ENCODE measurements at regions of chr17 and their contacts with region 1.

Region 1: GRCh38 chr17:12744298-12744697 is 45.0 kb upstream of the ARHGAP44 start:
- DNase-seq: no peak
- H3K4me3 ChIP-seq: no peak overlapping the region
- CTCF ChIP-seq: no peak

Region 2: DNA sequence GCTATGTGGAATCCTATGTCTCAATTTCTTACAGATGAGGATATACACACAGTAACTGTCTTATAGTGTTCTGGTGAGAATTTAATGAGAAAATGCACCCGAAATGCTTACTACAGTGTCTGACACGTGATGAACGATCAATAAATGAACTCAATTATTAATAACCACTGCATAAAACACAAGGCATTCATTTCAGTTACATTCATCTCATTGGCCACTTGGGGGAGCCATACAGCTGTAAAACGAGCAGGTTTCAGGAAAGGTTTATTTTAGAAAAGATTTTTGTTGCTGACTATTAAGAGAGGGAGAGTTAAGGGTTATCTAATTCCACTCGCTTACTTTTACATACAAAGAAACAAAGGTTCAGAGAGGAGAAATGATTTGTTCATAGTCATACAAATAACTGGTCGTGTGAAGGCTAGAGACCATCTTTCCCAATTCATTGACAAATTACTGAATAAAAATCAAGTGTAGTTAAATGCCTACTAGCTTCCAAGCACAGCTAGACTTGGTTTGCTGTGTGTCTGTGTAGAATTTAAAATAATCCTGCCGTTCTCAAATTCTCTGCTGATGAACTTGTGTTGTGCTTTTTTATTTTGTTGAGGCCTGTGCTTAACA is 563.5 kb before region 1 on chr17:
- CTCF ChIA-PET with region 1: interaction called, 26 read pairs
- POLR2A ChIA-PET with region 1: no interaction called
- DNase-seq: peak; percentile 24
- H3K4me3 ChIP-seq: no peak overlapping the region
- CTCF ChIP-seq: peak; percentile 46

Region 3: DNA sequence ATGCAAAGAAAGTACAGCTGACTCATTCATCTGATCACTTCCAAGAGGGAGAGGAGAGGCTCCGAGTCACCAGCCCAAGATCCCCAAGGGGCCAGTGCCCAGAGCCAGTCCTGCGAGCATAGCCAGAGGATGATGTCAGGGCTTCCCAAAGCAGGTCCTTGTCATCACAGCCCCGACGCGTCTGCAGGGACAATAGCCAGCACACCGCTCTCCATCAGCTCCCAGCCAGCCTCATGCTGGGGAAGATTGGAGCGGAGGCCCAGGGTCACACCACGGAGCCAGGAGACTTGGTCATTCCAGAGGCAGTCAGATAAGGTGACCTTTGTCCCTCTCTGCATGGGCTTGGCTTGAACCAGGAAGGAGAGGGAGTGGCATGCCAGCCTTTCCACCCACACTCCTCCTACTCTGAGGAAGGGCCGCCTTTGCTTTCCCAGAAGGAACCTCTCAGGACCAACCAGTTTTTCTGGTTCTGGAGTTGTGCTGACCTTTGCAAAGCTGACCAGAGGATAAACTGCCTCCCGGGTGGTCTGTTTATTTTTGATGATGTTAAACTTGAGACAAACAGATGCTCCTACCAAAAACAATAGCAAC is 13.3 kb before region 1 on chr17:
- CTCF ChIA-PET with region 1: interaction called, 35 read pairs
- POLR2A ChIA-PET with region 1: no interaction called
- DNase-seq: peak; percentile 46
- H3K4me3 ChIP-seq: no peak overlapping the region
- CTCF ChIP-seq: no peak

Region 4: DNA sequence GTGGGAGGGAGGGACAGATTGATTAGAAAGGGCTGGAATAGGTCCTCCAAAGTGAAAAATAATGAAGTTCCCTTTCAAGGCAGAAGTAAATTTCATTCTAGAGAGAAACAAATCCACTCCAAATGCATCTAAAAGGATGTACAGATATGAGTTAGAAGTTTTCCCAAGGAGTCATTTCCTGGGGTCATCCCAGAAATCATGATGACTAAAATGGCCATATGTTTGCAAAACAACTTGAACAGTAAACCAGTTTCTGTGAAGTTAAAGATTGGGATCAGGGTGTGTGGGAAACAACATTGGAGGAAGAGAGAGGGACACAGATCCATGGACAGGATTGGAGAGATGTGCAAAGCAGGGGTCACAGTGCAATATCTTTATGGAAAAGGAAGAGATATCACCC is 12.5 kb after region 1 on chr17:
- CTCF ChIA-PET with region 1: interaction called, 44 read pairs
- POLR2A ChIA-PET with region 1: no interaction called
- DNase-seq: no peak
- H3K4me3 ChIP-seq: no peak overlapping the region
- CTCF ChIP-seq: no peak

Region 5: GRCh38 chr17:12911239-12911638 is 166.9 kb after region 1 on chr17:
- CTCF ChIA-PET with region 1: no interaction called
- POLR2A ChIA-PET with region 1: no interaction called
- DNase-seq: no peak
- H3K4me3 ChIP-seq: no peak overlapping the region
- CTCF ChIP-seq: no peak

Measured in AG04449 (cell line).